Activated CD8-positive, alpha-beta memory T cell treated with anti-CD3 and anti-CD28 coated beads, Interleukin-2, amount 10 ng/mL, durations not matched to agents 7 days and 5 days (primary cell): ENCODE measurements at regions of chr22 and their contacts with region 1.

Region 1: GRCh38 chr22:35231585-35232084 is 25.7 kb upstream of the HMGXB4 start:
- DNase-seq: peak; percentile 77
- ATAC-seq: peak; percentile 82
- H3K4me3 Mint-ChIP-seq: peak overlapping the region; percentile 49
- H3K27ac Mint-ChIP-seq: no peak overlapping the region
- H3K4me1 Mint-ChIP-seq: peaks cover 11% of the 10 kb centered on the region
- H3K27me3 Mint-ChIP-seq: peaks cover 33% of the 10 kb centered on the region

Region 2: GRCh38 chr22:35116817-35117216 is 114.8 kb before region 1 on chr22:
- CTCF ChIA-PET with region 1: no interaction called
- DNase-seq: no peak
- ATAC-seq: no peak
- H3K4me3 Mint-ChIP-seq: no peak overlapping the region
- H3K27ac Mint-ChIP-seq: no peak overlapping the region
- H3K4me1 Mint-ChIP-seq: no peaks in the 10 kb centered on the region
- H3K27me3 Mint-ChIP-seq: no peaks in the 10 kb centered on the region

Region 3: GRCh38 chr22:35150183-35151107 is 81.2 kb before region 1 on chr22:
- CTCF ChIA-PET with region 1: interaction called, 20 read pairs
- DNase-seq: peak; percentile 73
- ATAC-seq: peak; percentile 47
- H3K4me3 Mint-ChIP-seq: no peak overlapping the region
- H3K27ac Mint-ChIP-seq: no peak overlapping the region
- H3K4me1 Mint-ChIP-seq: no peaks in the 10 kb centered on the region
- H3K27me3 Mint-ChIP-seq: peaks cover 2% of the 10 kb centered on the region

Region 4: GRCh38 chr22:35220221-35220620 is 11.4 kb before region 1 on chr22:
- CTCF ChIA-PET with region 1: interaction called, 29 read pairs
- DNase-seq: no peak
- ATAC-seq: no peak
- H3K4me3 Mint-ChIP-seq: no peak overlapping the region
- H3K27ac Mint-ChIP-seq: no peak overlapping the region
- H3K4me1 Mint-ChIP-seq: no peaks in the 10 kb centered on the region
- H3K27me3 Mint-ChIP-seq: peaks cover 7% of the 10 kb centered on the region